Caco-2 (cell line): ENCODE measurements at regions of chr5 and their contacts with region 1.

Region 1: GRCh38 chr5:26482810-26483375 is 555.5 kb downstream of the CDH9 start:
- DNase-seq: peak; percentile 39 to 49
- H3K4me3 ChIP-seq: no peak overlapping the region
- H3K4me3 Mint-ChIP-seq: no peak overlapping the region
- H3K27ac Mint-ChIP-seq: no peak overlapping the region
- H3K4me1 ChIP-seq: no peaks in the 10 kb centered on the region
- H3K4me1 Mint-ChIP-seq: no peaks in the 10 kb centered on the region
- H3K27me3 ChIP-seq: no peaks in the 10 kb centered on the region
- H3K27me3 Mint-ChIP-seq: no peaks in the 10 kb centered on the region
- CTCF ChIP-seq: peak; percentile 63 to 65

Region 2: DNA sequence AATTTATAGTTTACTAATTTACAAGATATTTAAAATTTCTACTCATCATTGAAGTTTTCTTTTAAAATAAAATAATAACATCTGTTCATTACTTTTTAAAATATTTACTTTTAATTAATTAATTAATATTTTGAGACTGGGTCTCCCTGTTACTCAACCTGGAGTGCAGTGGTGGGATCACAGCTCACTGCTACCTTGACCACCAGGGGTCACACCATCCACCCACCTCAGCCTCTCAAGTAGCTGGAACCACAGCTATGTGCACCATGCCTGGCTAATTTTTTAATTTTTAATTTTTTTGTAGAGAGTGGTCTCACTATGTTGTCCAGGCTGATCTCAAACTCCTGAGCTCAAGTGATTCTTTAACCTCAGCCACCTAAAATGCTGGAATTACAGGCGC is 458.1 kb before region 1 on chr5:
- CTCF ChIA-PET with region 1: interaction called, 3 read pairs
- POLR2A ChIA-PET with region 1: no interaction called
- intact Hi-C with region 1: loop called (anchors 5 kb)
- DNase-seq: peak in 1 of 2 experiments; percentile 29
- H3K4me3 ChIP-seq: no peak overlapping the region
- H3K4me3 Mint-ChIP-seq: no peak overlapping the region
- H3K27ac Mint-ChIP-seq: no peak overlapping the region
- H3K4me1 ChIP-seq: no peaks in the 10 kb centered on the region
- H3K4me1 Mint-ChIP-seq: no peaks in the 10 kb centered on the region
- H3K27me3 ChIP-seq: no peaks in the 10 kb centered on the region
- H3K27me3 Mint-ChIP-seq: no peaks in the 10 kb centered on the region
- CTCF ChIP-seq: peak; percentile 32 to 48